CD8-positive, alpha-beta T cell (primary cell): ENCODE measurements at regions of chr6 and their contacts with region 1.

Region 1: DNA sequence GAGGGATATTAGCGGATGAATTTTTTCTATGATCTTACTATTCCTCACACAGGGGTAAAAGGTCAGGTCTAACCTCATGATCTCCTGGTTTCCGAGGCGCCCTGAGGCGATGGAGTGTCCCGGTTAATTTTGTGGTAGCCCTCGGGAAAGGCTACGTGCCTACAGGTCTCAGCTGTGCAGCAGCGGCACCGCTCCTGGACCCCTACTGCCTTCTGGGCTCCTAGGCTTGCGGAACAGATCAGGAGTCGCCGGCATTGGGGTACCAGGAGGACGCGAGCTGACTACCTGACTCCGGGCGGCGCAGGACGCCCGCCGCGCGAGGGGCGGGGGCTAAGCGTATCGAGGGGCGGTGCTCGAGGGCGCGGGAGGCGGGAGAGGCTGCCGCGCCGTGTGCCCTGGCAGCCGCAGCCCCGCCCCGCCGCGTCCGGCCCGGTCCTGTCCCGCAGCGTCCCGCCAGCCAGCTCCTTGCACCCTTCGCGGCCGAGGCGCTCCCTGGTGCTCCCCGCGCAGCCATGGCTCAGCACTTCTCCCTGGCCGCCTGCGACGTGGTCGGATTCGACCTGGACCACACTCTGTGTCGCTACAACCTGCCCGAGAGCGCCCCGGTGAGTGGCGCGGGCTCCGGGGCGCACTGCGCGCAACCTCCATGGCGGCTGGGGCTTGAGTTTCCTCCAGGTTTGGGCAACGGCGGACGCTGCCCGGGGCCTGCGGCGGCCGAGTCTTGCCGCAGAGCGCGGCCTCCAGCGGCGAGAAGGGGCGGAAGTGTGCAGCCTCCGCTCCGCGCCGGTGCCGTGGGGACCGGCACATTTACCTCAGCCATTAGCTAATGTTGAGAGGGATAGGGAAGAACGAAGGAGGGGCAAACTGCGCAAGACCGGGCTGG is at the start of gene NT5DC1:
- DNase-seq: peak; percentile 67 to 91 (median 83)
- ATAC-seq: peak; percentile 93
- H3K4me3 ChIP-seq: peak within 1 kb of the TSS; percentile 74 to 87
- H3K4me3 Mint-ChIP-seq: peak within 1 kb of the TSS; percentile 93
- H3K27ac ChIP-seq: peak within 1 kb of the TSS; percentile 76 to 83
- H3K27ac Mint-ChIP-seq: peak within 1 kb of the TSS; percentile 90
- H3K4me1 ChIP-seq: peaks cover 46% of the 10 kb centered on the region
- H3K4me1 Mint-ChIP-seq: peaks cover 54% of the 10 kb centered on the region
- H3K27me3 ChIP-seq: no peaks in the 10 kb centered on the region
- H3K27me3 Mint-ChIP-seq: no peaks in the 10 kb centered on the region
- CTCF ChIP-seq: peak; percentile 55
- total RNA-seq, gene NT5DC1: 19.2 to 23.3 TPM

Region 2: GRCh38 chr6:114747987-114748630 is 1352.6 kb before region 1 on chr6:
- CTCF ChIA-PET with region 1: no interaction called
- POLR2A ChIA-PET with region 1: no interaction called
- intact Hi-C with region 1: loop called in 1 of 2 experiments (anchors 5 kb)
- DNase-seq: peak in 3 of 9 experiments; percentile 3 to 19 (median 10)
- ATAC-seq: no peak
- H3K4me3 ChIP-seq: no peak overlapping the region
- H3K4me3 Mint-ChIP-seq: no peak overlapping the region
- H3K27ac ChIP-seq: no peak overlapping the region
- H3K27ac Mint-ChIP-seq: no peak overlapping the region
- H3K4me1 ChIP-seq: no peaks in the 10 kb centered on the region
- H3K4me1 Mint-ChIP-seq: no peaks in the 10 kb centered on the region
- H3K27me3 ChIP-seq: no peaks in the 10 kb centered on the region
- H3K27me3 Mint-ChIP-seq: no peaks in the 10 kb centered on the region
- CTCF ChIP-seq: no peak

Region 3: GRCh38 chr6:116111552-116112528 is 11.2 kb after region 1 on chr6:
- CTCF ChIA-PET with region 1: interaction called, 11 read pairs
- POLR2A ChIA-PET with region 1: interaction called, 10 read pairs
- intact Hi-C with region 1: no loop called
- DNase-seq: peak in 4 of 9 experiments; percentile 12 to 40 (median 24)
- ATAC-seq: no peak
- H3K4me3 ChIP-seq: no peak overlapping the region
- H3K4me3 Mint-ChIP-seq: no peak overlapping the region
- H3K27ac ChIP-seq: no peak overlapping the region
- H3K27ac Mint-ChIP-seq: no peak overlapping the region
- H3K4me1 ChIP-seq: no peaks in the 10 kb centered on the region
- H3K4me1 Mint-ChIP-seq: peaks cover 4% of the 10 kb centered on the region
- H3K27me3 ChIP-seq: no peaks in the 10 kb centered on the region
- H3K27me3 Mint-ChIP-seq: no peaks in the 10 kb centered on the region
- CTCF ChIP-seq: peak; percentile 28

Region 4: GRCh38 chr6:116144605-116145004 is 43.9 kb after region 1 on chr6:
- CTCF ChIA-PET with region 1: no interaction called
- POLR2A ChIA-PET with region 1: no interaction called
- intact Hi-C with region 1: no loop called
- DNase-seq: no peak
- ATAC-seq: no peak
- H3K4me3 ChIP-seq: no peak overlapping the region
- H3K4me3 Mint-ChIP-seq: no peak overlapping the region
- H3K27ac ChIP-seq: no peak overlapping the region
- H3K27ac Mint-ChIP-seq: no peak overlapping the region
- H3K4me1 ChIP-seq: no peaks in the 10 kb centered on the region
- H3K4me1 Mint-ChIP-seq: no peaks in the 10 kb centered on the region
- H3K27me3 ChIP-seq: no peaks in the 10 kb centered on the region
- H3K27me3 Mint-ChIP-seq: no peaks in the 10 kb centered on the region
- CTCF ChIP-seq: no peak

Region 5: GRCh38 chr6:116253505-116254296 is 153.0 kb after region 1 on chr6 and contains the start of gene TSPYL4:
- CTCF ChIA-PET with region 1: no interaction called
- POLR2A ChIA-PET with region 1: no interaction called
- intact Hi-C with region 1: loop called in 1 of 2 experiments (anchors 5 kb)
- DNase-seq: peak; percentile 83 to 98 (median 91)
- ATAC-seq: peak; percentile 94
- H3K4me3 ChIP-seq: peak within 1 kb of the TSS; percentile 89 to 91
- H3K4me3 Mint-ChIP-seq: no peak within 1 kb of the TSS
- H3K27ac ChIP-seq: peak within 1 kb of the TSS; percentile 95 to 98
- H3K27ac Mint-ChIP-seq: no peak within 1 kb of the TSS
- H3K4me1 ChIP-seq: peaks cover 37% of the 10 kb centered on the region
- H3K4me1 Mint-ChIP-seq: peaks cover 26% of the 10 kb centered on the region
- H3K27me3 ChIP-seq: no peaks in the 10 kb centered on the region
- H3K27me3 Mint-ChIP-seq: no peaks in the 10 kb centered on the region
- CTCF ChIP-seq: no peak
- total RNA-seq, gene TSPYL4: 51.0 to 51.6 TPM

Region 6: GRCh38 chr6:116570856-116571682 is 470.4 kb after region 1 on chr6 and contains the start of gene RWDD1:
- CTCF ChIA-PET with region 1: no interaction called
- POLR2A ChIA-PET with region 1: interaction called, 7 read pairs
- intact Hi-C with region 1: loop called (anchors 1 to 2 kb)
- DNase-seq: peak; percentile 94 to 99 (median 98)
- ATAC-seq: peak; percentile 95
- H3K4me3 ChIP-seq: peak within 1 kb of the TSS; percentile 75 to 93
- H3K4me3 Mint-ChIP-seq: peak within 1 kb of the TSS; percentile 99
- H3K27ac ChIP-seq: peak within 1 kb of the TSS; percentile 92 to 99
- H3K27ac Mint-ChIP-seq: peak within 1 kb of the TSS; percentile 99
- H3K4me1 ChIP-seq: peaks cover 32% of the 10 kb centered on the region
- H3K4me1 Mint-ChIP-seq: peaks cover 52% of the 10 kb centered on the region
- H3K27me3 ChIP-seq: no peaks in the 10 kb centered on the region
- H3K27me3 Mint-ChIP-seq: no peaks in the 10 kb centered on the region
- CTCF ChIP-seq: no peak
- total RNA-seq, gene RWDD1: 65.1 to 68.7 TPM

Region 7: GRCh38 chr6:116680975-116681808 is 580.5 kb after region 1 on chr6 and contains the start of gene KPNA5:
- CTCF ChIA-PET with region 1: no interaction called
- POLR2A ChIA-PET with region 1: no interaction called
- intact Hi-C with region 1: loop called in 1 of 2 experiments (anchors 5 kb)
- DNase-seq: peak; percentile 85 to 96 (median 92)
- ATAC-seq: peak; percentile 93
- H3K4me3 ChIP-seq: peak within 1 kb of the TSS; percentile 95 to 97
- H3K4me3 Mint-ChIP-seq: peak within 1 kb of the TSS; percentile 96
- H3K27ac ChIP-seq: peak within 1 kb of the TSS; percentile 93 to 94
- H3K27ac Mint-ChIP-seq: peak within 1 kb of the TSS; percentile 99
- H3K4me1 ChIP-seq: peaks cover 17% of the 10 kb centered on the region
- H3K4me1 Mint-ChIP-seq: peaks cover 50% of the 10 kb centered on the region
- H3K27me3 ChIP-seq: no peaks in the 10 kb centered on the region
- H3K27me3 Mint-ChIP-seq: no peaks in the 10 kb centered on the region
- CTCF ChIP-seq: no peak
- total RNA-seq, gene KPNA5: 56.3 to 57.4 TPM